ENCODE measurements at regions of chr4 and their contacts with region 1.

Region 1: GRCh38 chr4:26330186-26330787 is 9.5 kb downstream of the RBPJ start:
- DNase-seq: no peak
- H3K4me3 ChIP-seq: no peak overlapping the region
- CTCF ChIP-seq: peak; percentile 44

Region 2: DNA sequence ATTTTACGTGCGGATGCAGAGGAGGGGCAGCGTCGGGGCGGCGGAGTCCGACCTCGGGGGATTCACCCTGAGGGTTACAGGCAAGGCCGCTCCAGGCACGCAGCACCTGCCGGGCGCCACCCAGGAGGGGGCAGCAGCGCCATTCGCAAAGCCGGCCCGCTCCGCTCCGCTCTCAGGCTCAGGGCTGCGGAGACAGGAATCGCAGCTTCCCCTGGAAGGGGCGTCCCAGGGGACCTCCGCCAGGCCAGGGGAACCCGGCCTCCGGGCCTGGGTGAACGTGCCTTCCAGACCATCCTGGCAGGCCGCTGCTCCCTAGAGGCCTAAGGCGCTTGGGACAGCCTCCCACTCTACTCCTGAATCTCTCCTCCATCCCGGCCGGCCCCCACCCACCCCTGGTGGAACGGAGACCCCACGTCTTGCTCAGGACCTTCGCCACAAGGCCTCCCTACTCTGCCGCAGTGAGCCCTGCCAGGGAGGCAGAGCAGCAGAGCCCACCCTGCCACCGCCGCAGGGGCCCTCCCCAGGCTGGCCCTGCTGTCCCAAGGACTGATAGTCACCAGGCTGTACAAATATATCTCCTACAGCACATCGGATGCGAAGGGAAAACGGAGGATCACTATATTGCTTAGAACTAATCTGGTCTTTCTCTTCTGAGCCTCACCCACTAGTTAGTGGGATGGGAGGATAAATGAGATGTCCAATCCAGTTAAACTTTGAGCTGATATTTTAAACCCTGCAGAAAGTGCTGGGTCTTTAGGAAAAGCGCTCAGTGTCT is 301.3 kb before region 1 on chr4:
- CTCF ChIA-PET with region 1: interaction called, 106 read pairs
- POLR2A ChIA-PET with region 1: no interaction called
- DNase-seq: no peak
- H3K4me3 ChIP-seq: no peak overlapping the region
- CTCF ChIP-seq: peak; percentile 98

Region 3: DNA sequence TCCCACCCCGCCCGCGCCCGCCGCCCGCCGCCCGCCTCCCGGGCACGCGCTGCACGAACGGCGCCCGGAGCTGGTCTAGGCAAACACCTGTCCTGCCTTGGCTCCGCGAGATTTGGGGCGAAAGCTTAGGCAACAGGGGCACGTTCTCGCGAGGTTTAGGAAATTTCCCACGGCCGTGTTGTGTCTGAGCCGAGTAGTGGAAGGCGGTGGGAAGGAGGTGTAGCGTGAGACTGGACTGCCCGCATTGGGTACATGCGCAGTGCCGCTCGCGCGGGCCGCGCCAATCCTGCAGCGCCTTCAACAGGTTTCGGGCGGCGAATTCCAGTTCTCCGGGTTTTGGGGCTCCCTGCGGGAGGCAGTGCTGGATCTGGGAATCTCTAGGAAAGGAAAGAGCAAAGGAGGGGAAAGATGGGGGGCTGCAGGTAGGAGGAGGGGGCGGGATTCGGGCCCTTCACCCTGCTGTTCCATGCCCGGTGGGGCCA is 10.8 kb before region 1 on chr4:
- CTCF ChIA-PET with region 1: interaction called, 16 read pairs
- POLR2A ChIA-PET with region 1: no interaction called
- DNase-seq: peak; percentile 98
- H3K4me3 ChIP-seq: peak overlapping the region; percentile 90
- CTCF ChIP-seq: no peak

Region 4: GRCh38 chr4:26360864-26361263 is 30.6 kb after region 1 on chr4:
- CTCF ChIA-PET with region 1: interaction called, 12 read pairs
- POLR2A ChIA-PET with region 1: no interaction called
- DNase-seq: no peak
- H3K4me3 ChIP-seq: no peak overlapping the region
- CTCF ChIP-seq: no peak

Region 5: DNA sequence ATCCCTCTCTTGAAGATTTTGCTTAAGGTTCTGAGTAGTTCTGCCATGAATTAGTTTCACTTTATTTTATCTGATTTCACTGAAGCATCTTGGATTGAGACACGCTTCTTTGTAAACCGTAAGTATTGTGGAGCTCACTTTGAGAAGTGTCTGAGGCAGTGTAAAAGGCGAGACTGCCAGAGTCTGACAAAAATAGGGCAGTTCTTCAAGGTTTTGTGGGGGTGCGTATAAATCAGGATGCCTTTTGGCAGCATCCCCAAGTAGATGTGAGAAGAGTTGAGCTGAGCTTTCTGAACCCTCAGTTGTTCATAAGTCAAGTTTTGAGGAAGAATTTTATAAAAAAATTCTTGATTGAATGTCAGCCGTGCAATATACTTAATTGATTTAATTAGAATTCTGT is 66.8 kb after region 1 on chr4:
- CTCF ChIA-PET with region 1: interaction called, 21 read pairs
- POLR2A ChIA-PET with region 1: no interaction called
- DNase-seq: no peak
- H3K4me3 ChIP-seq: no peak overlapping the region
- CTCF ChIP-seq: no peak

Region 6: DNA sequence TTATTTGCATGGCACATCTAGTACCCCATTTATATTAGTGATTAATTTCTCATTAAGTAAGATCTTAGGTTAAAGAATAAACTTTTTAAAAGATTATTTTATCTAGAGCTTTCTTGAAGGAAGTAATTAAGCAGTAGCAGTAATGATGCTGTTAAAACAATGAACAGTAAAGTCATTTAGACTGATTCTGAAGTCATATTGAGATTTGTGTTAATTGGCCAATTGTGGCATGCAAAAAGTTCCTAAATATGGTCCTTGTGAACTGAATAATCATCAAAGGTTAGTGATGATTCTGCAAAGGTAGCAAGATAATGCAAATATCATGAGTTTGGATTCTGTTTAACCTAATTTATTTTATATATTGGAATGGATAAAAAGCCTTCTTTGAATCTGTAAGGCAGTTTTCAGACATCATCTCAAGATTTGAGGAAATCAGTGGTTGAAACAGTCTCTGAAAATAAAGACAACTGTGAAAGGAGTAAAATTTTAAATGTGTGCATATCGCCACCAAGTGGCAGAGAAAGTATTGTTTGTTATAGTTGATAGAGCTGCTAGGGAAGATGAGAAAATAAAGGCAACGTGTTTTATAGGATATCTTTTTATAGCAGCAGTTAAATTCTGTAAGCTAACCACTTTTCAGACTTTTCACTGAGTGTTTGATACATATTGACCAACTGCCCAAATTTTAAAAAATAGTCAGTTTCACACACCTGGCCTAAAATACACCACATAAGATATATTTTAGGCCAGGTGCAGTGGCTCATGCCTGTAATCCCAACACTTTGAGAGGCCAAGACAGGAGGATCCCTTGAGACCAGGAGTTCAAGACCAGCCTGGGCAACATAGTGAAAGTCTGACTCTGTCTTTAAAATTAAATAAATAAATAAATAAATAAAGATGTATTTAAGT is 80.4 kb after region 1 on chr4:
- CTCF ChIA-PET with region 1: interaction called, 211 read pairs
- POLR2A ChIA-PET with region 1: interaction called, 3 read pairs
- DNase-seq: no peak
- H3K4me3 ChIP-seq: no peak overlapping the region
- CTCF ChIP-seq: peak; percentile 30

Region 7: GRCh38 chr4:26709246-26709645 is 379.0 kb after region 1 on chr4:
- CTCF ChIA-PET with region 1: no interaction called
- POLR2A ChIA-PET with region 1: no interaction called
- DNase-seq: no peak
- H3K4me3 ChIP-seq: no peak overlapping the region
- CTCF ChIP-seq: no peak

Region 8: DNA sequence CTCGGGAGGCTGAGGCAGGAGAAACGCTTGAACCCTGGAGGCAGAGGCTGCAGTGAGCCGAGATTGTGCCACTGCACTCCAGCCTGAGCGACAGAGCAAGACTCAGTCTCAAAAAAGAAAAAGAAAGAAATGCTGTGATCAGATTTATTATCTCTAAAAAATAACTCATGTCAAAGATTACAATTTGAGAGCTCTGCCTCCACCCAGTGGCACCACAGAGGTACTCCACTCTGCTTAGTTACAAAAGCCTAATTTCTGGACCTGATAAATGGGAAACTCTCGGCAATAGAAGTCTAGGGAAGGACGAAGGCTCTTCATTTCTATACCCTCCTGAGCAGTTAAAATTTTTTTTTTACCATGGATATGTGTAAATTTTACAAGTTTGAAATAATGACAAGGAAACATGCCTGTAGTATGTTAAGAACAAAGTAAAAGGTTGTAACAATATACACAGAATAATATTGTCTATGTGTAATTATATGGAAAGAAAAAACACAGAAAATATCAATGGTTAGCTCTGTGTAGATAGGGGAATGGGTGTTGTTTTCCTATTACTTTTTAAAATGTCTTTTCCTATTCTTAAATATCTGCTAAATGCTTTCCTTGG is 680.1 kb after region 1 on chr4:
- CTCF ChIA-PET with region 1: interaction called, 17 read pairs
- POLR2A ChIA-PET with region 1: no interaction called
- DNase-seq: no peak
- H3K4me3 ChIP-seq: no peak overlapping the region
- CTCF ChIP-seq: peak; percentile 61

Measured in AG04449 (cell line).